B cell (primary cell): ENCODE measurements at regions of chr12 and their contacts with region 1.

Region 1: GRCh38 chr12:111761099-111761498 is 5.6 kb upstream of the ALDH2 start:
- DNase-seq: peak; percentile 36
- ATAC-seq: peak; percentile 26
- H3K4me3 ChIP-seq: no peak overlapping the region
- H3K4me3 Mint-ChIP-seq: peak overlapping the region; percentile 62
- H3K27ac ChIP-seq: peak overlapping the region in 1 of 2 donors; percentile 44
- H3K27ac Mint-ChIP-seq: peak overlapping the region; percentile 86
- H3K4me1 ChIP-seq: peaks cover 67 to 81% of the 10 kb centered on the region in 2 donors
- H3K4me1 Mint-ChIP-seq: peaks cover 80% of the 10 kb centered on the region
- H3K27me3 ChIP-seq: no peaks in the 10 kb centered on the region
- H3K27me3 Mint-ChIP-seq: no peaks in the 10 kb centered on the region
- CTCF ChIP-seq: no peak

Region 2: GRCh38 chr12:111775205-111776193 is 14.4 kb after region 1 on chr12:
- CTCF ChIA-PET with region 1: interaction called, 16 read pairs
- POLR2A ChIA-PET with region 1: interaction called, 18 read pairs
- intact Hi-C with region 1: loop called (anchors 1 kb)
- DNase-seq: peak; percentile 92
- ATAC-seq: peak; percentile 93
- H3K4me3 ChIP-seq: peak overlapping the region in 4 of 5 experiments; percentile 3 to 48 (median 26)
- H3K4me3 Mint-ChIP-seq: peak overlapping the region; percentile 80
- H3K27ac ChIP-seq: peak overlapping the region; percentile 94 to 97
- H3K27ac Mint-ChIP-seq: peak overlapping the region; percentile 98
- H3K4me1 ChIP-seq: peaks cover 31 to 32% of the 10 kb centered on the region in 2 donors
- H3K4me1 Mint-ChIP-seq: peaks cover 36% of the 10 kb centered on the region
- H3K27me3 ChIP-seq: no peaks in the 10 kb centered on the region
- H3K27me3 Mint-ChIP-seq: no peaks in the 10 kb centered on the region
- CTCF ChIP-seq: no peak

Region 3: GRCh38 chr12:113135178-113136127 is 1374.4 kb after region 1 on chr12 and contains the start of gene RASAL1:
- CTCF ChIA-PET with region 1: no interaction called
- POLR2A ChIA-PET with region 1: no interaction called
- intact Hi-C with region 1: no loop called
- DNase-seq: peak; percentile 74
- ATAC-seq: peak; percentile 80
- H3K4me3 ChIP-seq: peak within 1 kb of the TSS in 4 of 5 experiments; percentile 24 to 46 (median 32)
- H3K4me3 Mint-ChIP-seq: peak within 1 kb of the TSS; percentile 84
- H3K27ac ChIP-seq: no peak within 1 kb of the TSS
- H3K27ac Mint-ChIP-seq: peak within 1 kb of the TSS; percentile 85
- H3K4me1 ChIP-seq: peaks cover 16 to 25% of the 10 kb centered on the region in 2 donors
- H3K4me1 Mint-ChIP-seq: peaks cover 26% of the 10 kb centered on the region
- H3K27me3 ChIP-seq: peaks cover 0 to 21% (median 6%) of the 10 kb centered on the region in 4 experiments
- H3K27me3 Mint-ChIP-seq: peaks cover 6% of the 10 kb centered on the region
- CTCF ChIP-seq: peak; percentile 70
- total RNA-seq, gene RASAL1: 11.0 and 13.9 TPM in 2 replicates